B cell (primary cell): ENCODE measurements at regions of chr10 and their contacts with region 1.

Region 1: DNA sequence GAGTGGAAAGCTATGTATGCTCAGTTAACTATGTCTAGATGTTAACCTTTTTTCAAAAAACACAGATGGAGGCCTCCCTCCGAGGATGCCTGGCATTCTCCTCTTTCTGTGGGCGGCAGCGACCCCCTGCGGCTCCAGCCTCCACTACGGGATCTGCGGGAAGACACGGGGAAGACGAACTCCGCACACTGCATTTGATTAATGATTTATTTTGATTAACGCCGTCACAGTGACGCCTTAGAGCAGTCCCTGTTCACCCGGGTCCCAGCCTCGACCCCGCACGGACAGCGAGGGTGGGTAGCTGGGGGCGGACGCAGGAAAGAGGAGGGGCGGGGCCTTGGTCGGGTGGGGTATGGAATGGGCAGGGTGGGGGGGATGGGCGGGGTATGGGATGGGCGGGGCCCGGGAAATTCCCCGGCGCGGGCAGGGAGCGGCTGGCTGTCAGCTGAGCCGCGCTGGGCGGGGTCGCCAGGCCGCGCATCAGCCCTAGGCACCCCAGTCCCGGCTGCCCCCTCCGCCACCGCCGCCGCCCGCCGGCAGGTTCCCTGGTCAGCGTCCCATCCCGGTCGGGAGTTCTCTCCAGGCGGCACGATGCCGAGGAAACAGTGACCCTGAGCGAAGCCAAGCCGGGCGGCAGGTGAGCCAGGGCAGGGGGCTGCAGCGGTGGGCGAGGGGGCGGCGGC is at the start of gene OPTN:
- DNase-seq: peak; percentile 89
- ATAC-seq: peak; percentile 87
- H3K4me3 ChIP-seq: peak within 1 kb of the TSS; percentile 57 to 89 (median 71)
- H3K4me3 Mint-ChIP-seq: peak within 1 kb of the TSS; percentile 93
- H3K27ac ChIP-seq: peak within 1 kb of the TSS; percentile 3 to 87
- H3K27ac Mint-ChIP-seq: peak within 1 kb of the TSS; percentile 90
- H3K4me1 ChIP-seq: peaks cover 3 to 13% of the 10 kb centered on the region in 2 donors
- H3K4me1 Mint-ChIP-seq: peaks cover 18% of the 10 kb centered on the region
- H3K27me3 ChIP-seq: no peaks in the 10 kb centered on the region
- H3K27me3 Mint-ChIP-seq: no peaks in the 10 kb centered on the region
- CTCF ChIP-seq: peak; percentile 69
- total RNA-seq, gene OPTN: 42.8 and 42.9 TPM in 2 replicates

Region 2: GRCh38 chr10:12902135-12902572 is 197.7 kb before region 1 on chr10:
- CTCF ChIA-PET with region 1: interaction called, 10 read pairs
- POLR2A ChIA-PET with region 1: no interaction called
- intact Hi-C with region 1: no loop called
- DNase-seq: peak; percentile 72
- ATAC-seq: no peak
- H3K4me3 ChIP-seq: no peak overlapping the region
- H3K4me3 Mint-ChIP-seq: no peak overlapping the region
- H3K27ac ChIP-seq: no peak overlapping the region
- H3K27ac Mint-ChIP-seq: no peak overlapping the region
- H3K4me1 ChIP-seq: no peaks in the 10 kb centered on the region
- H3K4me1 Mint-ChIP-seq: no peaks in the 10 kb centered on the region
- H3K27me3 ChIP-seq: no peaks in the 10 kb centered on the region
- H3K27me3 Mint-ChIP-seq: peaks cover 17% of the 10 kb centered on the region
- CTCF ChIP-seq: peak; percentile 84

Region 3: DNA sequence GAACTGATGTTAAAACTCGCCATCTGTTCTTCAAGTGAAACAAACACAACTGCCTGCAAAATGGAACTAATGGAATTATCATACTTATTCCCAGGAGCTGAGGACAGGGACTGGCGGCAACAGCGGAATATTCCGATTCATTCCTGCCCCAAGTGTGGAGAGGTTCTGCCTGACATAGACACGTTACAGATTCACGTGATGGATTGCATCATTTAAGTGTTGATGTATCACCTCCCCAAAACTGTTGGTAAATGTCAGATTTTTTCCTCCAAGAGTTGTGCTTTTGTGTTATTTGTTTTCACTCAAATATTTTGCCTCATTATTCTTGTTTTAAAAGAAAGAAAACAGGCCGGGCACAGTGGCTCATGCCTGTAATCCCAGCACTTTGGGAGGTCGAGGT is 36.8 kb after region 1 on chr10:
- CTCF ChIA-PET with region 1: no interaction called
- POLR2A ChIA-PET with region 1: no interaction called
- intact Hi-C with region 1: no loop called
- DNase-seq: no peak
- ATAC-seq: no peak
- H3K4me3 ChIP-seq: no peak overlapping the region
- H3K4me3 Mint-ChIP-seq: no peak overlapping the region
- H3K27ac ChIP-seq: no peak overlapping the region
- H3K27ac Mint-ChIP-seq: no peak overlapping the region
- H3K4me1 ChIP-seq: no peaks in the 10 kb centered on the region
- H3K4me1 Mint-ChIP-seq: no peaks in the 10 kb centered on the region
- H3K27me3 ChIP-seq: no peaks in the 10 kb centered on the region
- H3K27me3 Mint-ChIP-seq: no peaks in the 10 kb centered on the region
- CTCF ChIP-seq: no peak

Region 4: GRCh38 chr10:13160934-13161856 is 61.4 kb after region 1 on chr10 and contains the start of gene MCM10:
- CTCF ChIA-PET with region 1: interaction called, 3 read pairs
- POLR2A ChIA-PET with region 1: no interaction called
- intact Hi-C with region 1: loop called (anchors 1 kb)
- DNase-seq: peak; percentile 97
- ATAC-seq: peak; percentile 100
- H3K4me3 ChIP-seq: peak within 1 kb of the TSS; percentile 34 to 82 (median 63)
- H3K4me3 Mint-ChIP-seq: peak within 1 kb of the TSS; percentile 93
- H3K27ac ChIP-seq: peak within 1 kb of the TSS in 1 of 2 donors; percentile 54
- H3K27ac Mint-ChIP-seq: peak within 1 kb of the TSS; percentile 81
- H3K4me1 ChIP-seq: peaks cover 10 to 12% of the 10 kb centered on the region in 2 donors
- H3K4me1 Mint-ChIP-seq: peaks cover 14% of the 10 kb centered on the region
- H3K27me3 ChIP-seq: no peaks in the 10 kb centered on the region
- H3K27me3 Mint-ChIP-seq: no peaks in the 10 kb centered on the region
- CTCF ChIP-seq: peak; percentile 89
- total RNA-seq, gene MCM10: 0.15 and 0.42 TPM in 2 replicates

Region 5: GRCh38 chr10:13348216-13349017 is 248.6 kb after region 1 on chr10 and contains the start of gene SEPHS1:
- CTCF ChIA-PET with region 1: no interaction called
- POLR2A ChIA-PET with region 1: no interaction called
- intact Hi-C with region 1: loop called (anchors 1 kb)
- DNase-seq: peak; percentile 81
- ATAC-seq: peak; percentile 69
- H3K4me3 ChIP-seq: peak within 1 kb of the TSS; percentile 55 to 87 (median 82)
- H3K4me3 Mint-ChIP-seq: peak within 1 kb of the TSS; percentile 92
- H3K27ac ChIP-seq: peak within 1 kb of the TSS; percentile 54 to 82
- H3K27ac Mint-ChIP-seq: peak within 1 kb of the TSS; percentile 93
- H3K4me1 ChIP-seq: peaks cover 26 to 38% of the 10 kb centered on the region in 2 donors
- H3K4me1 Mint-ChIP-seq: peaks cover 58% of the 10 kb centered on the region
- H3K27me3 ChIP-seq: peaks cover 0 to 30% (median 7%) of the 10 kb centered on the region in 4 experiments
- H3K27me3 Mint-ChIP-seq: peaks cover 4% of the 10 kb centered on the region
- CTCF ChIP-seq: no peak
- total RNA-seq, gene SEPHS1: 25.3 and 29.1 TPM in 2 replicates

Region 6: DNA sequence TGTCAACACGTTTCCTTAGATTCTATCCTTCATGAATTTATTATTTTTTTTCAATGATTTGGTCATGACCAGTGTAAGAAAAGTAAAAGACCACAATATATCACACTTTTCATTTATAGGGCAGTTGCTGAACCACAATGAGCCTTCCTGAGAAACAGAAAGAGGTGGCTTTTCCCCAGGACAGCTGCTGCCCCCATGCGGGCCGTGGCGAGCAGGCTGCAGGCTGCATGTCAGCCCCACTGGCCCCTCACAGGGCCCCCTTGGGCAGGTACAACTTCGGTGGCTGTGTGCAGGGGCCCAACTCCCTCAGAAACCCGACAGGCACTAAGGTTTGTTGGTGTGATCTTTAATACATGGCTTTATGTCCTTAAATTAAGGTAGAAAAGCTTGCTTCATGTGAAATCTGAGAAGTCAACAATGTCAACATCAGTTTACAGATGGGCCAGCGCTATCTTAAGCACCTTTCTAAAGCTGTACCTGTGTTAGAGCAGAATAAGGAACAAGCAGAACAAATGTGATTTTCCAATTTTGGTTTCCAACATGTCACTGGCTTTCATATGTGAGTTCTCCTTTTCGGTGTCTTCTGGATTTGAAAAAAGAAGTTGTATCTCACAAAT is 418.4 kb after region 1 on chr10:
- CTCF ChIA-PET with region 1: no interaction called
- POLR2A ChIA-PET with region 1: no interaction called
- intact Hi-C with region 1: no loop called
- DNase-seq: no peak
- ATAC-seq: no peak
- H3K4me3 ChIP-seq: no peak overlapping the region
- H3K4me3 Mint-ChIP-seq: no peak overlapping the region
- H3K27ac ChIP-seq: no peak overlapping the region
- H3K27ac Mint-ChIP-seq: no peak overlapping the region
- H3K4me1 ChIP-seq: no peaks in the 10 kb centered on the region
- H3K4me1 Mint-ChIP-seq: no peaks in the 10 kb centered on the region
- H3K27me3 ChIP-seq: peaks cover 0 to 15% (median 0%) of the 10 kb centered on the region in 4 experiments
- H3K27me3 Mint-ChIP-seq: peaks cover 53% of the 10 kb centered on the region
- CTCF ChIP-seq: no peak